ENCODE measurements at regions of chr1 and their contacts with region 1.

Region 1: GRCh38 chr1:244801246-244801645 is 34.2 kb upstream of the COX20 start:
- DNase-seq: peak; percentile 36
- ATAC-seq: peak; percentile 96
- H3K4me3 Mint-ChIP-seq: peak overlapping the region; percentile 55
- H3K27ac Mint-ChIP-seq: peak overlapping the region; percentile 59
- H3K4me1 Mint-ChIP-seq: peaks cover 5% of the 10 kb centered on the region
- H3K27me3 Mint-ChIP-seq: peaks cover 8% of the 10 kb centered on the region
- CTCF ChIP-seq: no peak

Region 2: GRCh38 chr1:244599937-244600350 is 201.3 kb before region 1 on chr1:
- CTCF ChIA-PET with region 1: interaction called, 126 read pairs
- POLR2A ChIA-PET with region 1: interaction called, 5 read pairs
- intact Hi-C with region 1: loop called (anchors 1 kb)
- DNase-seq: no peak
- ATAC-seq: peak; percentile 91
- H3K4me3 Mint-ChIP-seq: no peak overlapping the region
- H3K27ac Mint-ChIP-seq: no peak overlapping the region
- H3K4me1 Mint-ChIP-seq: peaks cover 11% of the 10 kb centered on the region
- H3K27me3 Mint-ChIP-seq: no peaks in the 10 kb centered on the region
- CTCF ChIP-seq: no peak

Region 3: DNA sequence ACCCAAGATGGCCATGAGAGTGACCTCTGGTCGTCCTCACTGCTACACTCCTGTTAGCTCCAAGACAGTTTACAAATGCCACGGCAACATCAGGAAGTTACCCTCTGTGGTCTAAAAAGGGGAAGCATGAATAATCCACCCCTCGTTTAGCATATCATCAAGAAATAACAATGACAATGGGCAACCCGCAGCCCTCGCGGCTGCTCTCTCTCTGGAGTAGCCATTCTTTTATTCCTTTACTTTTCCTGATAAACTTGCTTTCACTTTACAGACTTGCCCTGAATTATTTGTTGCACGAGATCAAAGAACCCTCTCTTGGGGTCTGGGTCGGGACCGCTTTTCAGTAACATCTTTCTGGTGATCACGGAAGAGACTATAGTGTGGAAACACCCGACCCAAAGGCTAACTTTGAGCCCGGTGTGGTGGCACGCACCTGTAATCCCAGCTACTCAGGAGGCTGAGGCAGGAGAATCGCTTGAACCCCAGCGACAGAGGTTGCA is 14.4 kb after region 1 on chr1:
- CTCF ChIA-PET with region 1: interaction called, 11 read pairs
- POLR2A ChIA-PET with region 1: interaction called, 15 read pairs
- intact Hi-C with region 1: loop called (anchors 1 kb)
- DNase-seq: no peak
- ATAC-seq: peak; percentile 56
- H3K4me3 Mint-ChIP-seq: peak overlapping the region; percentile 82
- H3K27ac Mint-ChIP-seq: peak overlapping the region; percentile 84
- H3K4me1 Mint-ChIP-seq: peaks cover 28% of the 10 kb centered on the region
- H3K27me3 Mint-ChIP-seq: no peaks in the 10 kb centered on the region
- CTCF ChIP-seq: no peak

Region 4: GRCh38 chr1:244918421-244919319 is 117.4 kb after region 1 on chr1:
- CTCF ChIA-PET with region 1: no interaction called
- POLR2A ChIA-PET with region 1: no interaction called
- intact Hi-C with region 1: loop called (anchors 5 kb)
- DNase-seq: peak; percentile 61
- ATAC-seq: peak; percentile 83
- H3K4me3 Mint-ChIP-seq: peak overlapping the region; percentile 89
- H3K27ac Mint-ChIP-seq: peak overlapping the region; percentile 66
- H3K4me1 Mint-ChIP-seq: peaks cover 26% of the 10 kb centered on the region
- H3K27me3 Mint-ChIP-seq: no peaks in the 10 kb centered on the region
- CTCF ChIP-seq: no peak

Region 5: GRCh38 chr1:245894843-245895242 is 1093.6 kb after region 1 on chr1:
- CTCF ChIA-PET with region 1: no interaction called
- POLR2A ChIA-PET with region 1: no interaction called
- intact Hi-C with region 1: no loop called
- DNase-seq: no peak
- ATAC-seq: no peak
- H3K4me3 Mint-ChIP-seq: no peak overlapping the region
- H3K27ac Mint-ChIP-seq: no peak overlapping the region
- H3K4me1 Mint-ChIP-seq: peaks cover 10% of the 10 kb centered on the region
- H3K27me3 Mint-ChIP-seq: no peaks in the 10 kb centered on the region
- CTCF ChIP-seq: no peak